ENCODE measurements at regions of chr17 and their contacts with region 1.

Region 1: DNA sequence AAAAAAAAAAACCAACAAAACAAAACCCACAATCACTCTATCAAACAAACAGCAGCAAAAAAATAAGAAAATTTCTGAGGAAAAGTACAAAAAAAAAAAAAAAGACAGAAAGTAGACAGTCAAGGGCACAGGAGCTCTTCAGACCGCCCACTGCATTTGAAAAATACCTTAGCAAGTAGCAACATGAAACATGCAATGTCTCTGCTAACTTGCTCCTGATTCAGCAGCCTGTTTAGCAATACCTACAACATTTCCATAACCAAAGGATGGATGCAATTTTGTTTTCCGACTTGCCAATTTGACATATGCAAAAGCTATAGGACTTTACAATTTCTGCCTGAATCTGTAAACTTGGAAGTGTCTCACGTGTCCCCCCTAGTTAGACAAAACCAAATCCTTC is 57.4 kb downstream of the SYNRG start:
- DNase-seq: peak; percentile 79
- H3K4me3 ChIP-seq: peak overlapping the region in 2 of 3 experiments; percentile 10 to 22
- H3K27ac ChIP-seq: peak overlapping the region; percentile 39
- H3K4me1 ChIP-seq: peaks cover 18% of the 10 kb centered on the region
- H3K27me3 ChIP-seq: no peaks in the 10 kb centered on the region
- CTCF ChIP-seq: no peak

Region 2: GRCh38 chr17:36948717-36949460 is 602.9 kb before region 1 on chr17 and contains the start of gene AATF:
- CTCF ChIA-PET with region 1: interaction called, 17 read pairs
- dilution Hi-C with region 1: no loop called
- in situ Hi-C with region 1: no loop called
- intact Hi-C with region 1: no loop called
- DNase-seq: peak; percentile 95
- H3K4me3 ChIP-seq: peak within 1 kb of the TSS; percentile 78 to 86 (median 78)
- H3K27ac ChIP-seq: peak within 1 kb of the TSS; percentile 74
- H3K4me1 ChIP-seq: peaks cover 18% of the 10 kb centered on the region
- H3K27me3 ChIP-seq: peaks cover 28% of the 10 kb centered on the region
- CTCF ChIP-seq: no peak
- total RNA-seq, gene AATF: 21.2 to 70.3 TPM